ENCODE measurements at regions of chr12 and their contacts with region 1.

Region 1: DNA sequence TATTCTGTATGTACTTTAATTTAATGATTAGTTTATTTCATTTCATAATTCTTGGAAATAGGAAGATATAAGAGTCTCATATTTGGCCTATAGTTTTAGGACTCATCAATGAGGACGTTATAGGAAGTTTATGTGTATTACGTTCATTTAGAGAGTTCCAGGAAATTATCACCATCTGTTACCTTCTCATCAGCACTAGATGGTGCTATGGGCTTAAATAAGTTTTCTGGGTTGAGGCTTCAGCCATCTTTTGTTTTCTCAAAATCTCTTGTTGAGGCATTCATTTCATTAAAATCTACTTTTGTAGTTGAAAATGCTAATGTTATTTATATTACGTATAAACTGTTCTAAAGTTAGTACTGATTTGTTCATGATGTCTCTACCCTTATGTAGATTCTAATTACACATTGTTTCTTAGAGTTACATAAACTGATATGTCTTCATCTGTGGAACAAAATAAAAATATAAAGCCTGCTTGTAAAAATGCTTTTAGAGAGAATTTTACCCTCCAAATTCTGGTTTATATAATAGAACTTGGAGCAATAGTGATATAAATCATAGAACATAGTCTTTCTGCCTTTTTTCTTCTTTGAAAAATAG is 89.2 kb downstream of the CFAP54 start:
- DNase-seq: no peak
- H3K4me3 Mint-ChIP-seq: no peak overlapping the region
- H3K27ac Mint-ChIP-seq: no peak overlapping the region
- H3K4me1 Mint-ChIP-seq: no peaks in the 10 kb centered on the region
- H3K27me3 Mint-ChIP-seq: no peaks in the 10 kb centered on the region

Region 2: GRCh38 chr12:96710127-96710745 is 131.6 kb after region 1 on chr12:
- CTCF ChIA-PET with region 1: no interaction called
- DNase-seq: no peak
- H3K4me3 Mint-ChIP-seq: no peak overlapping the region
- H3K27ac Mint-ChIP-seq: no peak overlapping the region
- H3K4me1 Mint-ChIP-seq: no peaks in the 10 kb centered on the region
- H3K27me3 Mint-ChIP-seq: peaks cover 6% of the 10 kb centered on the region

Region 3: DNA sequence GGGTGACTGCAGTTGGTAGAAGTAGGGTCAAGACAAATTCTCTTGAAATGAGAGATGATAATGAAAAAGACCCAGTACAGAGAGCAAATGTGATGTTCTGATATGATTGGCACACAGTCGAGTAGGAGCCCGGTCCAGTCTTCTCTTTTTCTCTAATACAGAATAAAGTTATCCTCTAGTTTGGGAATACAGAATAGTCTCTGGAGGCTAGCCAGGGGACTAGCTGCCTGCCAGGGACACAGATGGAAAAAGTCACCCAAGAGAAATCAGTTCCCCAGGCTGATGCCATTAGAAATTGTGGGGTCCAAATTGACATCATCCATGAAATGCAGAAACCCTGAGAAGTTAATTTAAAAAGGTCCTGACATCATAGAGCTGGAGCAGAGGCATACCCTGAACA is 151.3 kb after region 1 on chr12:
- CTCF ChIA-PET with region 1: no interaction called
- DNase-seq: no peak
- H3K4me3 Mint-ChIP-seq: no peak overlapping the region
- H3K27ac Mint-ChIP-seq: no peak overlapping the region
- H3K4me1 Mint-ChIP-seq: peaks cover 6% of the 10 kb centered on the region
- H3K27me3 Mint-ChIP-seq: peaks cover 3% of the 10 kb centered on the region

Region 4: DNA sequence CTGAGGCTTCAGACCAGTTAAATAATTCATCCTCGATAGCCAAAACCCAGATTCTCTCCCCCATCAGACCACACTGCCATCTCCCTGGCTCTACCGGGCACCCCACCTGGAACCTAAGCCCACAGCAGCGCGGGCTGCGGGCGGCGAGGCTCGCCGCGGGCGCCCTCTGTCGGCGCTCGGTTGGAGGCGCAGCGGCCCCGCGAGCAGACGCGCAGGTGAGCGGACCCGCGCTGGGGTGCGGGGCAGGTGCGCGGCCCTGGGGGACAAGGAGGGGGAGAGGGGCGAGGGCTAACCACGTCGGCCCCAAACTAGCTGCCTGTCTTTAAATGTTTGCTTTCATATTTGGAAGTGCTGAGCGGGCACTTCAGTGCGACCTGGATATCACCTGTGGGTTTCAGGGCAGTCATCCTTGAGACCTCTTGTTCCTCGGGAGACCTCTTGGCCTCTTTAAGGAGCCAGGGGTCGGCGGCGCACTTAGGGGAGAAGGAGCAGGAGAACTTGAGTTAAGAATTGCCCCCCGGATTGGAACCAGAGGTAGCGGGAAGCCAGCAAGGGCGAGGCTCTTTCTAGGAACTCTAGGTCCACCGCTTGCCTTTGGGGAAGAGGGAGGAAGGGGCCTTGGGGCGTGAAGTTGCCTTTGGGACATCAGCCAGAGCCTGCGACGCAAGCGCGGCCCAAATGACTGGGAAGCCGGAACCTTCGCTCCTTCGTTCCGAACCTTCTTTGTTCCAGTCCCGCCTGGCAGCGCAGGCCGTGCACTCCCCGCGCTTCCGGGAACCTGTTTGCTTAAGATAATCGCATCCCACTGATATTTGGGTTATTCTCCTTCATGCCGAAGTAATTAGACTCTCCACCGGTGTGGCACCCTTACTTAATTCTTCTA is 407.1 kb after region 1 on chr12:
- CTCF ChIA-PET with region 1: interaction called, 11 read pairs
- DNase-seq: peak; percentile 44
- H3K4me3 Mint-ChIP-seq: peak overlapping the region; percentile 53
- H3K27ac Mint-ChIP-seq: no peak overlapping the region
- H3K4me1 Mint-ChIP-seq: peaks cover 6% of the 10 kb centered on the region
- H3K27me3 Mint-ChIP-seq: peaks cover 20% of the 10 kb centered on the region